GM18951 (cell line): ENCODE measurements at regions of chr17 and their contacts with region 1.

Region 1: DNA sequence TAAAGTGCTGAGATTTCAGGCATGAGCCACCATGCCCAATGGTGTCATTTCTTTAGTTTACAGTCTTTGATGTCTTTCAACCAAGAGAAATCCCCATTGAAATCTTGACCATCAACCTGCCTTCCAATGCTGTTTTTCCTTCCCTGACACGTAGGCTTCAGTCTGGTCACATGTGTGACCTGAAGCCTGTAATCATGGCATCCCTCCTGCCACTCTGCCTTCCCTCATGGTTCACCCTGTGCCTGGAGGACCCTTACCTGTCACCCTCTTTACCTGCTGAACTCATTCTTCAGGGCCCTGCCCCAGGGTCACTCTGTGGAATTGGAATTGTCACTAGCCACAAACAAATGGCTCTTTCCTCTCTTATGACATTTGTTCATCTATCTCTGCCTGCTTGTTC is 18.1 kb upstream of the ARHGAP23 start:
- POLR2A ChIP-seq: no peak

Region 2: DNA sequence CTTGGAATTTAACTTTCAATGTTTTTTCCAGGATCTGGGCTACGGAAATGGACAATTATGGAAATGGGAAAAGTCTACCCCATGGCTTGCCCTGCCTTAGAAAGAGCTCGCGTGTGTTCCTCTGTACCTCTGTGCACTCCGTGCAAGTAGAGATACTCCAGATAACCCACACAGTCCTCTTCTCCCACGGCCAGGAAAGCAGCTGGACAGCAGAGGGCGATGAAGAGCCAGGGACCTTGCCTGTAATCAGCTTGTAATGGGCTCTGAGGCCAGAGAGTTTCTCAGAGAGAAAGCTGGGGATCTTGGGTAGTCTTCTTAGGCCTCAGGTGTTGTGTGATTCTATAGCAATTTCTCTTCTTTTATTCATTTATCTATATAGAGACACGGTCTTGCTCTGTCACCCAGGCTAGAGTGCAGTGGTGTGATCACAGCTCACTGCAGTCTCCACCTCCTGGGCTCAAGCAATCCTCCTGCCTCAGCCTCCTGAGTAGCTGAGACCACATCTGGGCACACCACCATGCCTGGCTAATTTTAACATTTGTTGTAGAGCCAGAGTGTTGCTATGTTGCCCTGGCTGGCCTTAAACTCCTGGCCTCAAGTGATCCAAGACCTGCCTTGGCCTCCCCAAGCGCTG is 61.0 kb before region 1 on chr17:
- in situ Hi-C with region 1: loop called (anchors 5 kb)
- POLR2A ChIP-seq: no peak